Ascending aorta (tissue), 2 donors: ENCODE measurements at regions of chr19 and their contacts with region 1.

Region 1: DNA sequence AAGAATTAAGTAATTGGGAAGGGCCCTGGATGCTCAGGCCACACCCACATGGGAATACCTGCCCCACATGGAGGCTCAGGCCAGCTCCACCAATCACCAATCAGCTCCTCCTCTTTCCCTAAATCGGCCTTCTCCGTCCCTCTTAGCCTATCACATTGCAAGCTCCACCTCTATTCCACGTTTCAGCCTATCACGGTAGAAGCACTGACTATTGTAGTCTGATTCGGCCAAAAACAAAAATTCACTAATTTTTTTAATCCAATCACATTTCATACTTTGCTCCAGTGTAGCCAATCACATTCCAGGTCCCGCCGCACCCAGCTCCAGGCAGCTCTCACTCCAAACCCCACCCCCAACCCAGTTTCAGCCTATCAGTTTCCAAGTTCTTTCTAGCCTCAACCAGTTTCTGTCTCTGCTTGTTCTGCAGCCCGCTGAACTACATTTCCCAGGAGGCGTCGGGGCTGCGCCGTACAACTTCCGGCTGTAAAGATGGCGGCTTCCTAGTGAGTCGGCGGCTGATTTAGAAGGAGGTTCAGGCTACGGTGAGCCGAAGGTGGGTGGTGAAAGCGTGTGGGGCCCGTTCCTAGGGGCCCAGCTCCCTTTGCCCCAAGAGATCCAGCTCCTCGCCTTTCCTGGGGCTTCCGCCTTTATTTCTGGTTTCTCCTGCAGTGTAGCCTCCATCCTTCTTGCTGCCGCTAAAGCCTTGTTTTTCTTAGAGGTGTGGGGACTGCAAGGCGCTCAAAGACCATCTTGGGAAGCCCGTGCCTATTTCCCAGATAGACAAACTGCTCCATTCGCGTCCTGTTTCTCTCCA is at the start of gene BABAM1:
- DNase-seq: peak; percentile 92 to 99
- H3K4me3 ChIP-seq: peak within 1 kb of the TSS; percentile 79 to 96
- H3K27ac ChIP-seq: peak within 1 kb of the TSS; percentile 61 to 83
- H3K4me1 ChIP-seq: peaks cover 5 to 6% of the 10 kb centered on the region in 2 donors
- H3K27me3 ChIP-seq: no peaks in the 10 kb centered on the region
- CTCF ChIP-seq: no peak
- total RNA-seq, gene BABAM1: 85.5 TPM

Region 2: GRCh38 chr19:17336872-17337722 is 69.9 kb after region 1 on chr19 and contains the start of gene GTPBP3:
- intact Hi-C with region 1: loop called (anchors 1 kb)
- DNase-seq: peak; percentile 97 to 99
- H3K4me3 ChIP-seq: peak within 1 kb of the TSS; percentile 84 to 91
- H3K27ac ChIP-seq: peak within 1 kb of the TSS; percentile 91 to 95
- H3K4me1 ChIP-seq: peaks cover 15 to 23% of the 10 kb centered on the region in 2 donors
- H3K27me3 ChIP-seq: no peaks in the 10 kb centered on the region
- CTCF ChIP-seq: no peak
- total RNA-seq, gene GTPBP3: 256 TPM